ENCODE measurements at regions of chr11 and their contacts with region 1.

Region 1: DNA sequence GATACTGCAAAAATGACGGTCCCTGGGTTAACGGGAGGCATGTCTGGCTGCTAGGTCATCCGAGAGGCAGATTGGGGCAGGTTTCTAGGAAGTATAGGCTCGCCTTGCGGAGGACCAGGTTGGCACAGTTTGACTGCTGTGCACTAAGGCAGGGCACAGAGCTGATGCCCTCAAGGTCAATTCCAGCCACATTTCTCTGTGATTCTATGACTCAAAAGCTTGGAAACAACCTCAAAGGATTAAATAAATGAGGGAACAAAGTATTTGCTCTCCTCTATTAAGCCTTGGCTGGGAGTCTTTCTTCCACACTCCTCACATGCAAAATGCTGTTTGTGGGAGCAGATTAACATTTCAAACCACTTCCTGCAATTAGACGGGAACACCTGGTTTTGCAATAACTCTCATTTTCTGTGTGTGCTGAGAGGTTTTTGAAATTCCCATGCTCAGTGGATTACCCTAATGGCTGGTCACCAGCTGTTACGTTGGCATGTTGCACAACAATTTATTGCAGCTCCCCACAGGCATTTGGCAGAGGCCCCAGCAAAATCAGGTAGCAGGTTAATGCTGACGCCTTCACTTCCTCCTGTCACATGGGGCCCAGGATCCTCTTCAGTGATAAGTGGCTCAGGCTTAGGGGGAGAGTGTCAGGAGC is 61.0 kb upstream of the PLET1 start:
- ATAC-seq: peak in 7 of 8 experiments; percentile 28 to 87 (median 42)
- H3K4me3 ChIP-seq: no peak overlapping the region
- H3K27ac ChIP-seq: peak overlapping the region in 1 of 2 donors; percentile 6
- H3K4me1 ChIP-seq: peaks cover 7 to 12% of the 10 kb centered on the region in 2 donors

Region 2: DNA sequence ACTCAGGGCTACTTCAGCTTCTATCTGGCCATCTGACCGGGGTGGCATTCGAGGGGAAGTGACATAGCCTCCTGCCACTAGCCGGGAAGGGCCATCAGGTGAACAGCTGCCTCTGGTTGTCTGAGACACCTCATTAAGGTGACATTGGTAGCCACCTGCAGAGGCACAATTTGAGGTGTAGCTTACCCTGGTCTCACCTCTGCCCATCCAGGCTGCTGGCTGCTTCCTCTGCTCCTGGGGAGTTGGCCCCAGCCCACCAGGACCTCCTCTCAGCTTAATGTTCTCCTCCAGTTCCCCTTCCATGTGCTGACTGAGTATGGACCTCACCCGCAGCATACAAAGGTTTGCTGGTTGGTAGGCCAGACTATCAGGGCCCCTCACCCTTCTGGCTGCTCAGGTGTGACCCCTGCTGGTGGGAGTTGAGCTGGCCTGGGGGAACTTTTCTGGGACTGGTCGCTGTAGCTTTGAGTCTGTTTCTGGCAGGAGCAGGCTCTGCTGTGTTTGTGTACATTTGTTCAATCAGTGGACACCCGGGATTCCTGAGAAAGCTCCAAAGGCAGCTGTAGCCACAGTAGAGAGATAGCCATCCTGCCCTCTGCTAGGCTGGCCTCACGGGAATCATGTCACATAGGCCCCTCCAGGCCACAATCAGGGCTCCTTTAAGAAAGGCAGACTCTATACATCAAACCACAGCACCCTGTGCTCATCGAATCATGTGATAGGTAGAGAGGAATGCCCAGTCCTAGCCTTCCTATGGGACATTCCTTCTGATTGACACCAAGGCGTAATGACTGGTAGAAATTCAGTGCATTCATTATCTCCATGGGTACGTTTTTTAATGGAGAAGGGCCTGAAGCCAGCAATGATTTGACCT is 234.1 kb after region 1 on chr11:
- in situ Hi-C with region 1: loop called in 2 of 9 experiments (anchors 25 kb)
- ATAC-seq: peak in 7 of 8 experiments; percentile 49 to 89 (median 74)
- H3K4me3 ChIP-seq: no peak overlapping the region
- H3K27ac ChIP-seq: no peak overlapping the region
- H3K4me1 ChIP-seq: peaks cover 15 to 31% of the 10 kb centered on the region in 2 donors

Measured in motor neuron (in vitro differentiated cells).